Dendritic cell treated with granulocyte-macrophage colony-stimulating factor and Interleukin-4, amounts not matched to agents 40 ng/mL and 50 ng/mL, for 4 days (primary cell): ENCODE measurements at regions of chr14 and their contacts with region 1.

Region 1: GRCh38 chr14:53152890-53153701 is at the start of gene DDHD1:
- H3K4me3 Mint-ChIP-seq: peak within 1 kb of the TSS; percentile 100
- H3K27ac Mint-ChIP-seq: peak within 1 kb of the TSS; percentile 98
- H3K4me1 Mint-ChIP-seq: peaks cover 29% of the 10 kb centered on the region
- H3K27me3 Mint-ChIP-seq: peaks cover 10% of the 10 kb centered on the region

Region 2: DNA sequence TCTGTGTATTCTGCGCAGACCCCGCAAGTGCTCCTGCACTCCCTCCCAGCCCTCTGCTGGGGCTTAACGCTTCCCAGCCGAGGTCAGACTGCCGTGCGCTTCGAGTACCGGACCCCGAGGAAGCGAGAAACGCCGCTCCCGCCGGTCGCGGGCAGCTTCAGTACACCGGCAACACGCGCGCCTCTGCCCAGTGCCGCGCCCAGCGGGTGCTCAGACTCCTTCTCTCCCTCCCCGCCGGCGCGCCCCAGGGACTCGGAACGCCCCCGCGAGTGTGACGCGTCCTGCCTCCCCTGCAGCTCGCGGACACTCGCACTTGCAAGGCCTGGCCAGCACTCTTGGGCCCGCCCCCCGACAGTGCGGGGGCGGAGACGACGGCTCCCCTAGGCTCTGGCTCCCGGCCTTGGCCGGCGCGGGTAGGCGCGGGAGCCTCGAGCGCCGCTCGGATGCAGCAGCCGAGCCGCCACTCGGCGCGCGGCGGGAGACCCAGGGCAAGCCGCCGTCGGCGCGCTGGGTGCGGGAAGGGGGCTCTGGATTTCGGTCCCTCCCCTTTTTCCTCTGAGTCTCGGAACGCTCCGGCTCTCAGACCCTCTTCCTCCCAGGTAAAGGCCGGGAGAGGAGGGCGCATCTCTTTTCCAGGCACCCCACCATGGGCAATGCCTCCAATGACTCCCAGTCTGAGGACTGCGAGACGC is 839.0 kb before region 1 on chr14 and contains the start of gene PTGER2:
- intact Hi-C with region 1: loop called (anchors 10 kb)
- H3K4me3 Mint-ChIP-seq: peak within 1 kb of the TSS; percentile 99
- H3K27ac Mint-ChIP-seq: peak within 1 kb of the TSS; percentile 98
- H3K4me1 Mint-ChIP-seq: peaks cover 75% of the 10 kb centered on the region
- H3K27me3 Mint-ChIP-seq: peaks cover 11% of the 10 kb centered on the region

Region 3: GRCh38 chr14:52729925-52730667 is 423.0 kb before region 1 on chr14 and contains the start of gene STYX:
- intact Hi-C with region 1: loop called (anchors 10 kb)
- H3K4me3 Mint-ChIP-seq: peak within 1 kb of the TSS; percentile 94
- H3K27ac Mint-ChIP-seq: peak within 1 kb of the TSS; percentile 97
- H3K4me1 Mint-ChIP-seq: peaks cover 20% of the 10 kb centered on the region
- H3K27me3 Mint-ChIP-seq: no peaks in the 10 kb centered on the region

Region 4: GRCh38 chr14:52791203-52792096 is 361.6 kb before region 1 on chr14 and contains the start of gene GNPNAT1:
- intact Hi-C with region 1: loop called (anchors 10 kb)
- H3K4me3 Mint-ChIP-seq: peak within 1 kb of the TSS; percentile 84
- H3K27ac Mint-ChIP-seq: peak within 1 kb of the TSS; percentile 90
- H3K4me1 Mint-ChIP-seq: peaks cover 28% of the 10 kb centered on the region
- H3K27me3 Mint-ChIP-seq: no peaks in the 10 kb centered on the region

Region 5: DNA sequence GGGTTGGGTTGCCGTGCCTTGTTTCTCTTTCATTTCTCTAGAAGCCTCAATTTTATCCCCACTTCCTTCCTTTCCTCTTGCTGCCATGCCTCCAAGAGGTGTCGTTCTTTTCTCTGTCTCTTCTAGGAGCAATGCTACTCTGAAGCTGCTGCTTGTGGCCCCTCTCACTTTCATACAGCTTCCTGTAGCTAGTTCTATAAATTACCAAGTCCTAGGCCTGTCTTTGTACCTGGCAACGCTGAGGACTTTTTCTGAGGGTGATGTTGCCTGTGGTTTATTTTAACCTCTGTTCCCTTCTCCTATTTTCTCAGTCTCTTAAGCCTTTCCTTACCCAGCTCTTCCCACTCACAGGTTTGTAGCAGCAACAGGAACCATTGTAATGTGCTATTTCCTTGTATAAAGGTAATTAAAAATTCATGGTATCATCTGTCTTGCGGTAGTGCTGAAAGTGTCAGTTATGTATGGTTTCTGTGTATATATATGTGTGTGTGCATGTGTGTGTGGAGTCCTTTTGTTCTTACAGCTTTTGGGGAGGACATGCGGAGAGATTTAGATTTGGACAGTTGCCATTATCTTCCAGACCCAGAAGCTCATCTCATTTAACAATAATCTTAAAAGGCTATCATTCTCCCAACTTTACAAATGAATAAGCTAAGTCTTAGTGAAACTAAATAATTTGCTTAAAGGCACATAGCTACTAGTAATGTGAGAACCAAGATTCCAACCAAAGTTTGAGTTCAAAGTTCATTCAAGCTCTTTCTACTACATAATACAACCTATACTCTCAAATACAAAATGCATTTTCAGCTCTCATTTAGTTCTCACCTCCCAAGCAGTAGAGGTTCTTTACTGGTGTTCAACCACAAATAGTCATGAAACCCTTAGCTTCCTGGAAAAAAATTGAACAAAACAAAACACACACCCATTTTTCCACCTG is 43.7 kb before region 1 on chr14:
- intact Hi-C with region 1: loop called (anchors 10 kb)
- H3K4me3 Mint-ChIP-seq: no peak overlapping the region
- H3K27ac Mint-ChIP-seq: no peak overlapping the region
- H3K4me1 Mint-ChIP-seq: peaks cover 5% of the 10 kb centered on the region
- H3K27me3 Mint-ChIP-seq: no peaks in the 10 kb centered on the region

Region 6: DNA sequence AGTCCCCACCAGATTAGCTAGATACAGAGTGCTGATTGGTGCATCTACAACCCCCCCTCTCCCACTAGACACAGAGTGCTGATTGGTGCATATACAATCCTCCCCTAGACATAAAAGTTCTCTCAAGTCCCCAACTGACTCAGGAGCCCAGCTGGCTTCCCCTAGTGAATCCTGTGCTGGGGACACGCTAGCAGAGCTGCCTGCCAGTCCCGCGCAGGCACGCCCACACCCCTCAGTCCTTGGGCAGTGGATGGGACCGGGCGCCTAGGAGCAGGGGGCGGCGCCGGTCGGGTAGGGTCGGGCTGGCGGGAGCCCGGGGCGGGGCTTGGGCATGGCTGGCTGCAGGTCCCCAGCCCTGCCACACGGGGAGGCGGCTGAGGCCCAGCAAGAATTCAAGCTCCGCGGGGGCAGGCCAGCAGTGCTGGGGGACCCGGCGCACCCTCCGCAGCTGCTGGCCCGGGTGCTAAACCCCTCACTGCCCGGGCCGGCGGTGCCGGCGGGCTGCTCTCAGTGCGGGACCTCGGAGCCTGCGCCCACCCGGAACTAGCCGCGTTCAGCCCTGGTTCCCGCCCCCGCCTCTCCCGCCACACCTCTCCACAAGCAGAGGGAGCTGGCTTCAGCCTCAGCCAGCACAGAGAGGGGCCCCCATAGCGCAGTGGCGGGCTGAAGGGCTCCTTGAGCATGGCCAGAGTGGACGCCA is 64.3 kb after region 1 on chr14:
- intact Hi-C with region 1: loop called (anchors 5 kb)
- H3K4me3 Mint-ChIP-seq: peak overlapping the region; percentile 79
- H3K27ac Mint-ChIP-seq: peak overlapping the region; percentile 74
- H3K4me1 Mint-ChIP-seq: peaks cover 7% of the 10 kb centered on the region
- H3K27me3 Mint-ChIP-seq: peaks cover 2% of the 10 kb centered on the region